ENCODE measurements at regions of chr16 and their contacts with region 1.

Region 1: GRCh38 chr16:1146409-1146808 is 6.5 kb upstream of the CACNA1H start:
- DNase-seq: no peak
- H3K4me3 ChIP-seq: no peak overlapping the region
- H3K27ac ChIP-seq: no peak overlapping the region
- H3K4me1 ChIP-seq: no peaks in the 10 kb centered on the region
- H3K27me3 ChIP-seq: no peaks in the 10 kb centered on the region
- CTCF ChIP-seq: no peak
- POLR2A ChIP-seq: no peak

Region 2: GRCh38 chr16:1113889-1114526 is 32.4 kb before region 1 on chr16:
- intact Hi-C with region 1: loop called (anchors 5 kb)
- DNase-seq: no peak
- H3K4me3 ChIP-seq: no peak overlapping the region
- H3K27ac ChIP-seq: no peak overlapping the region
- H3K4me1 ChIP-seq: peaks cover 6% of the 10 kb centered on the region
- H3K27me3 ChIP-seq: peaks cover 5% of the 10 kb centered on the region
- CTCF ChIP-seq: no peak
- POLR2A ChIP-seq: no peak

Region 3: DNA sequence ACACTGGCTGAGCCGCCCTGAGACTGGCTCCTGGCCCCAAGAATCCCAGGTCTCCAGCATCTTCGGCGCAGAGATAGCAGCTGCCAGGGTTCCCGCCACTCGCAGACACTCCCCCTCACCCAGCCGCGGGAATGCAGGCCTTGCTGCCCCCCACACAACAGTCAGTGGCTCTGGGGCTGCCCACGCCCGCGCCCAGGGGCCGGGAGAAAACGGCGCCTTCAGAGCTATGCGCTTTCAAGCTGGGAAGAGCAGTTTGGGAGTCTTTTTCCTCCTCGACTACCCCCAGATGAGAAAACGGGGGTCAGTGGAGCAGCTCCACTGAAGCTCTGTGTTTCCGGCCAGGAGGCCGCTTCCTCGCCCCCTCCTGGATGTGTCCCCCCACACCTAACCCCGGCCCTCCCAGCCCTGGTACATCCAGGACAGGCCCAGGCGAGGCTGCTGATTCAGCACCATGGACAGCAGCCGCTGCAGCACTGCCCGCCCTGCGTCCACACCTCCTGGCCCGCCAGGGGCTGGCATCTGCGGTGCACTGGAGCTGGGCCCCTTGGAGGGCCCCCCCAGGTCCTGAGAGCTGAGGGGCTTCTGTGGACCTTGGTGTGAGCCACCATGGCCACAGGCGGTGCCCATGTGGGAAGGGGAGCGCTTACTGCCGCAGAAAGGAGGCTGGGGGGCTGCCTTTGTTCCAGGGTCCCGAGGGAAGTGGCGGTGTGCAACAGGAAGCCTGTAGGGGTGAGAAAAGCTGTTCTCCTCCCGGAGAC is 42.2 kb after region 1 on chr16:
- intact Hi-C with region 1: no loop called
- DNase-seq: peak; percentile 32
- H3K4me3 ChIP-seq: no peak overlapping the region
- H3K27ac ChIP-seq: no peak overlapping the region
- H3K4me1 ChIP-seq: no peaks in the 10 kb centered on the region
- H3K27me3 ChIP-seq: no peaks in the 10 kb centered on the region
- CTCF ChIP-seq: peak in 1 of 4 experiments; percentile 9
- POLR2A ChIP-seq: no peak

Measured in prostate gland (tissue), 2 donors.